Right cardiac atrium (tissue), 5 donors: ENCODE measurements at regions of chr4 and their contacts with region 1.

Region 1: GRCh38 chr4:109671350-109671749 is 31.9 kb downstream of the CASP6 start:
- DNase-seq: no peak
- ATAC-seq: no peak
- H3K4me3 ChIP-seq: no peak overlapping the region
- H3K27ac ChIP-seq: no peak overlapping the region
- H3K4me1 ChIP-seq: no peaks in the 10 kb centered on the region
- H3K27me3 ChIP-seq: no peaks in the 10 kb centered on the region

Region 2: DNA sequence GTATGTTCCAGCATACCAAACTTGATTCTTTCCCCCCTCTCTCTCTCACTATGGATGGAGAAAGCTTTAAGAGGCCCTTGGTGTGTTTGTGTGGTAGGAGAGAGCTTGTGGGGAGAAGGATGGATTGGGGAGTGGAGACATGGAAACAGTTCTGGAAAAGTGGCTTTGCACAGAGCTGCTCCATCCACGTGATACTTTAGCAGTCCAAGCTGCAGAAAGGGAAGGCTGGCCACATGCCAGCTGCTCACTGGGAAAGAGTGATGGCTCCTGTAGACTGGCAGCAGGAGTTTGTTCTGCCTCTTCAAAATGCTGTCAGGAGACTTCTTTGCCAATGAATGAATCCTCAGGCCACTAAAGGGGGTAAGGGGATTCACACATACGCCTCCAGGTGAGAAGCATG is 259.4 kb before region 1 on chr4:
- intact Hi-C with region 1: no loop called
- DNase-seq: peak; percentile 53 to 87 (median 81)
- ATAC-seq: peak; percentile 45 to 76
- H3K4me3 ChIP-seq: no peak overlapping the region
- H3K27ac ChIP-seq: no peak overlapping the region
- H3K4me1 ChIP-seq: no peaks in the 10 kb centered on the region
- H3K27me3 ChIP-seq: no peaks in the 10 kb centered on the region

Region 3: DNA sequence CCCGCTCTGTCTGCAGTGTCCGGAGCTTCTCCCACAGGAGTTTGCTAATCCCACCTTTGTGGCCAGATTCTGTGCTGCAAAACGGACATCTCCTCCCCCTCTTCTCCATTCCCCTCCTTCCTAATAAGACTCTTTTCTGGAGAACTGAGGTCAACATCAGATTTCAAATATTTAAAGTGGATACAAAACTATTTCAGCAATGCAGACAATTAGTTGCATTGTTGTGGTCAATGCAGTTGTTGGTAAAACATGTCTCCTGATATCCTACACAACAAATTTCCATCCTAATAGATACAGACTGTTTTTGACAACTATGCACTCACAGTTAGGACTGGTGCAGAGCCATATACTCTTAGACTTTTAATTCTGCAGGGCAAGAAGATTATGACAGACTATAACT is 116.4 kb before region 1 on chr4:
- intact Hi-C with region 1: loop called in 1 of 4 experiments (anchors 5 kb)
- DNase-seq: no peak
- ATAC-seq: no peak
- H3K4me3 ChIP-seq: no peak overlapping the region
- H3K27ac ChIP-seq: no peak overlapping the region
- H3K4me1 ChIP-seq: no peaks in the 10 kb centered on the region
- H3K27me3 ChIP-seq: no peaks in the 10 kb centered on the region